Ascending aorta (tissue), 2 donors: ENCODE measurements at regions of chr14 and their contacts with region 1.

Region 1: DNA sequence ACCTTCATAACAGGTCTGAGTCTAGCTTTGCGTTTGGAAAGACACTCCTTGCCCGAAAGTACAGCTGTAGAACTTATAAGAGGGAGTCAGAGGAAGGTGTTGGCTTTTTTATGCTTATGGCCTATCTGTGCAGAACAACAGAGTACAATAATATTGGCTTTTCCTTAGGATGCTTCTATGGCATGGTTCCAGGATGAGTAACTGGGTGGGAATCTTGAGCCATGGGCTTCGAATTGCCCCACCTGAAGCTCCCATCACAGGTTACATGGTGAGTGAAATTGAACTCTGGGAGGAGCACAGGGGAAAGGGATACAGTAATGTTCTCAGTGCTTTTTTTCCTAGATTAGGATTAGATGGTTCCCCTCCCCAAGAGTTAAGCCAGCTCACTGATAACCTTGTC is 13.0 kb downstream of the PARP2 start:
- DNase-seq: no peak
- H3K4me3 ChIP-seq: no peak overlapping the region
- H3K27ac ChIP-seq: no peak overlapping the region
- H3K4me1 ChIP-seq: no peaks in the 10 kb centered on the region
- H3K27me3 ChIP-seq: no peaks in the 10 kb centered on the region
- CTCF ChIP-seq: no peak

Region 2: DNA sequence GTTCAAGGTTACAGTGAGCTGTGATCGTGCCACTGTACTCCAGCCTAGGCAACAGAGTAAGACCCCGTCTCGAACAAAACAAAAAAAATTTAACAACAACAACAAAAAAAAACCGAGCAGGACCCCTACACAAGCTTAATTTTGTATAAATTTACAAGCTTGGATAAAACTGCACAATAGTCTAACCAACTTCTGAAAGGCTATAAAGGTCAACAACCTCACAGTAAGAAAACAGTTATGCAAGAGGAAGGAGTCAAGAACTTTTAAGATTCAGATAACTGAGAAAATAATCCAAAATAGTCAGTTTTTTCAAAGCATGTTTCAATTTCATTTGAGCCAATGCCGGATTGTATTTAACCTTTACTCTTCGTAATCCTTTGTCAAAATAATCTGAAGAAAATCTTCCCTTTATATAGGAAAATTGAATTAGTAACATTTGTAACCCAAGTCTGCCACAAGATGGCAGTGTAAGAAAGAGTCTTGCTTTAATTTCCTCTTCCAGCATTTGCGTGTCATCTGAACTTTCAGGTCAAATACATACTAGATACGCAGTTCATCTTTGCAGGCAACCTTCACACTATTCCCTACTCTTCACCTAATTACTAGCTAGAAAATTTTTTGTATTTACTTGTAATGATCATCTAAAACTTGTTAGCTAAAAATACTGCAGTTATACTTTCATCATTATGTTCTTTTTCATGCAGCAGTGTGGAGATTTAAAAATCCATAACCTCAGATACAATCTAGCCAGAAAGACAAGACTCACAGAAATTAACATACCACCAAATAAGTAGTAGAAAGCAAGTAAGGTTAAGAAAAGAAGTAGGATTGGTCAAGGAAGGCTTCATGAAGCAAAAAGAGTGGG is 29.2 kb before region 1 on chr14:
- intact Hi-C with region 1: loop called (anchors 5 kb)
- DNase-seq: no peak
- H3K4me3 ChIP-seq: no peak overlapping the region
- H3K27ac ChIP-seq: peak overlapping the region in 1 of 2 donors; percentile 19
- H3K4me1 ChIP-seq: peaks cover 0 to 8% of the 10 kb centered on the region in 2 donors
- H3K27me3 ChIP-seq: no peaks in the 10 kb centered on the region
- CTCF ChIP-seq: peak; percentile 56 to 78 (median 64)

Region 3: DNA sequence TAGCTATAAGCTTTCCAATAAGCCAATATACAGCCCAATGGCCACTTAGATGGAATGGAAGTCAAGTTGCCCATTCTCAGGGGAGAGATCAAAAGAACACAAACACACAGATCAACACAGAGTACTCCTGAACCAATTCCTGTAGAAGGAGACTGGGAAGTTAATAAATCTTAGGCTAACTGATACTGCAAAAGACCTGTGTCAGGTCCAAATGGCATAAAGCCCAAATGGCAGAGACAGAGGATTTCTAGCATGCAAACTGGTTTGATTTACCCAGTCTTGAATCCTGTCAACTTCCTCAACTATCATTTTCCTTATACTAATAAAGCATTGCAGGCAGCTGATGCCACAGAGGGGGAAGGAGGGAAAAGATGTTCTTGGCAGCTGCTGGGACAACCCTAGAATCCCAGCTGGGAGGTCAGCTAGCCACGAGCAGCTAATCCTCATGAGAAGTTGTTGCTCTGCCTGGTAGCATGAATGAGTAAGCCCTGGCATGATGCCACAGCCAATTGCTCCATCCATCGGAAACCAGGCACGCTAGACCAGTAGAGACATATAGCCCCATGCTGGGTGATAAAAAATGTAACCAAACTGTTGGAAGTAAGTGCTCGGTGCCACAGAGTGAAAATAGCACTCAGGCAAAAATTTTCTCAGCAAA is 358.3 kb after region 1 on chr14:
- intact Hi-C with region 1: no loop called
- DNase-seq: peak; percentile 69 to 88
- H3K4me3 ChIP-seq: no peak overlapping the region
- H3K27ac ChIP-seq: peak overlapping the region in 1 of 2 donors; percentile 38
- H3K4me1 ChIP-seq: no peaks in the 10 kb centered on the region
- H3K27me3 ChIP-seq: no peaks in the 10 kb centered on the region
- CTCF ChIP-seq: no peak